Head of caudate nucleus (tissue), 42 donors: ENCODE measurements at regions of chr1 and their contacts with region 1.

Region 1: GRCh38 chr1:203340112-203340804 is 10.7 kb downstream of the FMOD start:
- DNase-seq: peak; percentile 60 to 93 (median 80)

Region 2: GRCh38 chr1:202926720-202927491 is 413.4 kb before region 1 on chr1 and contains the start of gene KLHL12:
- intact Hi-C with region 1: no loop called
- DNase-seq: peak; percentile 92 to 99 (median 97)

Region 3: GRCh38 chr1:203273206-203273868 is 66.9 kb before region 1 on chr1:
- intact Hi-C with region 1: loop called (anchors 2 kb)
- DNase-seq: peak; percentile 78 to 97 (median 91)

Region 4: DNA sequence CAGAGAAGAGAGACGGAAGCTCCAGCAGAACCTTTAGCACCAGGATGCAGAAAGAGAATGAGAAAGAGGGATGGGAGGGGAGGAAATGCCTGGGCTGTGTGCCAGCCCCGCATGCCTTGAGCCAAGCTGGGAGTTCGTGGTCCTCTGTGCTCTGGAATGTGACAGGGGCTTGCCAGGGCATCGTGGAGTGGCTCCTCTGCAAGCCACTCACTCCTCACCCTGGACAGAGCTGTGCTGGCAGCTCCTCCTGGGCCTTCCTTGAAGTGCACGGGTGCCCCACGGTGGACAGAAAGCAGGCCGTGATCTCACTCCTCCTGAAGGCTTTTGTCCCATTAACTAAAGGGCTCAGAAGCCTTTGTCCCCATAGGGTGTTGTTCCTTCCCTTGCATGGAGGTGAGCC is 100.5 kb after region 1 on chr1:
- intact Hi-C with region 1: loop called (anchors 2 kb)
- DNase-seq: peak; percentile 18 to 91 (median 74)

Region 5: DNA sequence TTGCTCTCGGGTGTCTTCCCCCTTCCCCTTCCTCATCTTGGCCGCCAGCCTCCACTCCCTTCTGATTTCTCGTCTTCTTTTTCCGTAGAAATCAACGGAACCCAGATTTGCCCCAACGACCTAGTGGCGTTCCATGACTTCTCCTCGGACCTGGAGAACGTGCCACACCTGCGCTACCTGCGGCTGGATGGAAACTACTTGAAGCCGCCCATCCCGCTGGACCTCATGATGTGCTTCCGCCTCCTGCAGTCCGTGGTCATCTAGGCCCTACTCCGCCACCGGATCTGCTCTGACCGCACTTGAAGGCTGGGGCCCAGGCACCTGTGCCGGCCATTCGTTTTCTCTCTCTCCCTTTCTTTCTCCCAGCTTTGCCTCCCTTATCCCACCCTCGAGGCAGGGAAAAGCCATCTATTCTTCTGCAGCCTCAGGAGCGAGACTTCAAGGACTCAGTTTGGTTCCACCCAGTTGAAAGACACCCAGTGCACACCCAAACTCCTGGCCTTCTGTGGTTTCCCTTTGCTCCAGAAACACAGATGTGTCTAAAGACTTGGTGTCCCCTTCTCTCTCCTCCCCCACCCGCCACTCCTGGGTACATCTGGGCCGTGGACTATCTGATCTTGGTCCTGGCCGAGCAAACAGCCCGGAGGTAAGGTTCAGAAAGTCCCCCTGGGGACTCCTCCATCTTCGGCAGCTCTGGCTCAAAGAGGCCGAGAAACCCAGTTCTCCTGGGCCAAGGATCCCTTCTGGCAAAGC is 146.5 kb after region 1 on chr1:
- intact Hi-C with region 1: loop called (anchors 2 kb)
- DNase-seq: no peak

Region 6: GRCh38 chr1:203520315-203520714 is 180.1 kb after region 1 on chr1:
- intact Hi-C with region 1: no loop called
- DNase-seq: no peak

Region 7: DNA sequence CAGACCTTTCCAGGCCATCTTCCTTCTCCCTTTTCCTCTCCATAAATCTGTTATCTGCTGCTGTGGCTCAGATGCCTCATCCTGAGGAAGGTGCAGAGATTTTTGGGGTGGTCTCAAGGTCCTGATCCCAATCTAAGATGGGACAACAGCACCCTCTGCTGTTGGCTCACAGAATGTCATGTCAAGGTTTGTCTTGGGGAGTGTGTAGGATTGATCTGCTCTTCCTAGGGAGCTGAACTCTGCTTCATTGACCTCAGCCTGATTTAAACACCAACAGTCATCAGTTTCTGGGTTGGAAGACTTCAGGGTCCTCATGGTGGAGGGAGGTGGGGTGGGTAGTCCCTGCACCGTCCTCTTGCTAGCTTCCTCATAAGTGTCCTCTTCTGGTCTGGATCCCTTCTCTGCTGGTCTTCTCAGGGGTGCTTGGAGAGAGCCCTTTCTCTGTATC is 361.9 kb after region 1 on chr1:
- intact Hi-C with region 1: loop called (anchors 5 kb)
- DNase-seq: peak in 41 of 42 donors; percentile 28 to 91 (median 73)